CD8-positive, alpha-beta memory T cell (primary cell): ENCODE measurements at regions of chr2 and their contacts with region 1.

Region 1: DNA sequence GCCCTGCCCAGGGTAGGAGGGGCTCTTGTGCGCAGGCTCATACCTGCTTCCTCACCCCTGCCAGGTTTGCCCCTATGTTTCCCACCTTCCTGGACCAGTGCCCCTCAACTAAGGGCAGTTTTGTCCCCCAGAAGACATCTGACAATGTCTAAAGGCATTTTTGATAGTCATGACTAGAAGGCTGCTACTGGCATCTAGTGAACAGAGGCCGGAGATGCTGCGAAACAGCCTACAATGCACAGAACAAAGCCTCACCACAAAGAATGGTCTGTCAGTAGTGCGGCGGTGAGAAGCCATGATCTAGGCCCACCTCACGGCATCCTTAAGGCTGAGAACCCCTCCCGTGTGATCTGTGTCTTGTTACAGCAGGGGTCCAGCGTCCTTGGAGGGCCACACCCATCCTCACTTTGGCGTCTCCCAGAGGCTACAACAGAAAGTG is 96.0 kb downstream of the TMEM17 start:
- DNase-seq: no peak
- H3K4me3 ChIP-seq: no peak overlapping the region
- H3K4me3 Mint-ChIP-seq: no peak overlapping the region
- H3K27ac ChIP-seq: no peak overlapping the region
- H3K27ac Mint-ChIP-seq: peak overlapping the region in 4 of 8 donors; percentile 17 to 61 (median 24)
- H3K4me1 ChIP-seq: peaks cover 6% of the 10 kb centered on the region
- H3K4me1 Mint-ChIP-seq: peaks cover 12 to 23% (median 14%) of the 10 kb centered on the region in 3 donors
- H3K27me3 ChIP-seq: no peaks in the 10 kb centered on the region
- H3K27me3 Mint-ChIP-seq: peaks cover 0 to 12% of the 10 kb centered on the region in 2 donors

Region 2: DNA sequence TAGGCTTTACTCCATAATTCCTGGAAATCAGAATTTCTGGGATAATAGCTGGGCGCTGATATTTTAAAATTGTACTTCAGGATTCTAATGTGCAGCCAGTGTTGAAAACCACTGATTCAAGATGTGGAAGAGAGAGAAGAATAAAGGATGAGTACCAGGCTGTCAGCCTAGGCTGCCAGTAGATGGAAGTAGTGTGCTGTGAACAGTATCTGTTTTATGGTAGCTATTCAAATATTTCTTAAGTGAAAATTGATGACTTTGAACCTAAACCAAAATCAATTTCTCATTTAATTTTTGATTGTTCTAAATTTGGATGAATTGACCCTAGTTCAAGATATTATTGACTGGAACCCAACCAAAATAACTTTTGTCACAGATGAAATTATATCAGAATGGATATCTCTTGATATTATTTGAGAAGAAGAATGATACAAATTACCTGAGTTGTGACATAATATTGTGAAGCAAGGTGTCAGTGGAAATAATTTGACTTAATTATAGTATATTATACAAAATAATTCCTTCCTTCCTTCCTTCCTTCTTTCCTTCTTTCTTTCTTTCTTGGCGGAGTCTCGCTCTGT is 416.5 kb before region 1 on chr2:
- CTCF ChIA-PET with region 1: interaction called, 10 read pairs
- POLR2A ChIA-PET with region 1: no interaction called
- DNase-seq: peak in 2 of 5 donors; percentile 19 to 33
- H3K4me3 ChIP-seq: no peak overlapping the region
- H3K4me3 Mint-ChIP-seq: no peak overlapping the region
- H3K27ac ChIP-seq: no peak overlapping the region
- H3K27ac Mint-ChIP-seq: no peak overlapping the region
- H3K4me1 ChIP-seq: no peaks in the 10 kb centered on the region
- H3K4me1 Mint-ChIP-seq: no peaks in the 10 kb centered on the region
- H3K27me3 ChIP-seq: no peaks in the 10 kb centered on the region
- H3K27me3 Mint-ChIP-seq: no peaks in the 10 kb centered on the region